ENCODE measurements at regions of chr6 and their contacts with region 1.

Region 1: GRCh38 chr6:42075159-42075838 is 25.0 kb downstream of the TAF8 start:
- DNase-seq: peak; percentile 72
- H3K4me3 ChIP-seq: no peak overlapping the region
- H3K27ac ChIP-seq: no peak overlapping the region
- H3K4me1 ChIP-seq: no peaks in the 10 kb centered on the region
- H3K27me3 ChIP-seq: no peaks in the 10 kb centered on the region
- CTCF ChIP-seq: peak; percentile 81

Region 2: DNA sequence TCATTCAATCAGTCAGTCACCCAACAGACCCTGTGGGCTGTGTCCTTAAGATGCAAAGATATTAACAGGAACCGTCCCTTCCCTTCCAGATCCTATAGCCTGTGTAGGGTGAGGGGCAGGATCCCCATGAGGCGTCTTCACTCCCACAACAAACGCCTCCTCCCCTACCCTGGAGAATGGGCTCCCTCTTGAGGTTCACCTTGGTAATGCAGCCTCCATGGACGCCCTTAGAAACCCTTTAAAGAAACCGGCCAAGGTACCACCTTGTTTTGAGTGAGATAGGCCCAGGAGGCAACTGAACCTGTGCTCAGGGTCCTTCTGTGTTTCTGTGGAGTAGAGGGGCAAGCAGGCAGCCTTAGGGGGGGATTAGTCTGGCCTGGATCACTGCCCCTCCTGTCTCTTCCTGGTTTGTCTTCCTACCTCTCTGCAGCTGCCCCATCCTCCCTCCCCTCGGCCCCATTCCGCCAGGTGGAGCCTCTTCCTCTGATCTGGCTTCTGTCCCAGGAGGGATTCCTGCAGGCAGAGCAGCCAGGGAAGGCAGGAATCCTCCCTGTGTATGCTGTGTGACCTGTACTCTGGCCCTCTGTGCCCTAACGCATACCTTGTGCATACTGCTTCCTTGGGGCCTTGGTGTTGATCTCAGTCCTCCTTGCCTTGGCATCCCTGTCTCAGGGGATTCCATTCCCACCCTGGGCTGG is 91.3 kb after region 1 on chr6:
- CTCF ChIA-PET with region 1: interaction called, 3 read pairs
- POLR2A ChIA-PET with region 1: no interaction called
- intact Hi-C with region 1: loop called (anchors 1 kb)
- DNase-seq: peak; percentile 86
- H3K4me3 ChIP-seq: no peak overlapping the region
- H3K27ac ChIP-seq: no peak overlapping the region
- H3K4me1 ChIP-seq: no peaks in the 10 kb centered on the region
- H3K27me3 ChIP-seq: no peaks in the 10 kb centered on the region
- CTCF ChIP-seq: peak; percentile 90

Region 3: DNA sequence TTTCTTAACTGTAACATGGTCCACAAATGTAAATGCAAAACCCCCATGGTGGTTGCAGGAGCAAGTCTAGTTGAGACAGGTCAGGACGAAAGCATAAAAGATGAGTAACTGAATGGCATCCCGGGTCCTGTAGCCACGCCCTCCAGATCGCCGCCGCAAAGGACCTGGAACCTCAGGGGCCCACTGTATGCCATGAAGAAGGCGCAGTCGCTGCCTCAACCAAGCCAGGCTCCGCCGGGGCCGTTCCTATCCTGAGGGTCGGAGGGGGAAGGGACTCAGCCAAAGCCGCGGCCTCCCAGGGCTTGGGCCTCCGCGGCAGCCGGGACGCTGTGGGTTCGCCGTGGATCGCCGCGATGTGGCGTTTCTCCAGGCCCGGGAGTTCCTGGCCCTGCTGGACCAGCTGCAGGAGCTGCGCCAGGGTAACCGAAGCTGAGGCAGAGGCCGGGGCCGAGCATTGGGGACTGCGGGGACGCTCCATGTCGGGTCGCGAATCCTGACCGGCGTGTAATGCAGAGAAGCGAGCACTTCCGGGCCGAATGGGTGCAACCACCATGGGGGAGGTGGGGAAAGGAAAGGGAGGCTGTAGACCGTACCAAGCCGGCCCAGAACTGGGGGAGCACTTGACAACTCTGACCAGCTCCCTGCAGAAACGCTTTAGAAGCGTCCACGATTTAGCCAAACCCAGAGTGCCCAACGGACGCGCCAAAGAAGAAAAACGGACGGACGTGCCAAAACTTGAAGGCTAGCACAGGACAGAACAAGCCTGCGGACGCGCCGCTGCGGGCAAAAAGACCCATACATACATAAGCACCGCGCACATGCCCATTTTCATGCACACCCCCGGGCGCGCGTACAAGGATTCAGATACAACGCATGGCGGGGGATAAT is 815.3 kb after region 1 on chr6:
- CTCF ChIA-PET with region 1: no interaction called
- POLR2A ChIA-PET with region 1: no interaction called
- intact Hi-C with region 1: loop called (anchors 10 kb)
- DNase-seq: peak; percentile 97
- H3K4me3 ChIP-seq: peak overlapping the region; percentile 75
- H3K27ac ChIP-seq: peak overlapping the region; percentile 90
- H3K4me1 ChIP-seq: peaks cover 5% of the 10 kb centered on the region
- H3K27me3 ChIP-seq: no peaks in the 10 kb centered on the region
- CTCF ChIP-seq: no peak